ENCODE measurements at regions of chr9 and their contacts with region 1.

Region 1: DNA sequence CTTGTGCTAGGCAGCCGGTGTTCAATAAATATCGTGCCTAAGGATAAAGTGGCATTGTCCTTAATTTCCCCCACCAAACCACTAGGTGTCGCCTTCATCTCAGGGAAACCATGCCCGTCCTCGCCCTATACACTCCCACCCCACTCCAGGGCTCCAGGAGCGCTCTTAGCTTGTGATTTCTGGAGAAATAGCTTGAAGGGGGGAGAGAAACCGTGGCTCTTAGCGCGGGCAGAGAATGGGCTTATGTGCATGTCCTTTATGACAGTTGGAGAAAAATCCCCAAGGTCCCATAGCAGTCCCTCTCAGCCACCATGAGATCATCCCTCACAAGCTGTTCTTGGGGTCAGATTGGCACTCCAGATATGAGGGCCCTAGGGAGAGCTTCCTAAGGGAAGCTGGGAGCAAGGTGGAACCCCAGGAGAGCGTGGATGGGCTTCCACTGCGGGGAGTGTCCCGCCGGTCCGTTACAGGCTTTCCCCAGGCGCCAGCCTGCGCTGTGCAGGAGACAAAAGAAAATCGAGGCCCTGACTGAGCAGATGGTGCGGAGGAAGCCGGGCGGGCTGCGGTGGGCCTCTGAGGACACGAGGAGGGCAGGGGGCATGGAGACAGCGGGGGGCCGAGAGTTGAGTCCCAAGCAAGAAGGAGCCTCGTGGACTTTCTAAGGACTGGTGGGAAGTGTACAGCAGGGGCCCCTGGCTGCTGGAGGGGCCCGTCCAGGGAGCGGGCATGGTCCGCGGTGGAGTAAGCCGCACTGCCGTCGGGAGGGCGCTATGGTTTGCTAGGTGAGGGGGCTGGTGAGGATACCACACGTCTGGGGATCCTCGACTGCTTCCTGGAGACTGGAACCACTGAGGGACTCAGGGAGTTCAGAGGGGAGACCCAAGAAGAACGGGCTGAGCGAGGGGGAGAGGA is 750 bp upstream of the NPR2 start:
- DNase-seq: peak; percentile 68 to 80 (median 72)
- H3K4me3 ChIP-seq: peak overlapping the region in 1 of 7 experiments; percentile 35
- H3K27ac ChIP-seq: no peak overlapping the region
- H3K4me1 ChIP-seq: peaks cover 0 to 18% (median 10%) of the 10 kb centered on the region in 4 experiments
- H3K27me3 ChIP-seq: peaks cover 0 to 3% (median 0%) of the 10 kb centered on the region in 5 experiments

Region 2: GRCh38 chr9:35756275-35757225 is 34.1 kb before region 1 on chr9:
- CTCF ChIA-PET with region 1: interaction called, 10 read pairs
- POLR2A ChIA-PET with region 1: no interaction called
- DNase-seq: peak; percentile 81 to 88 (median 86)
- H3K4me3 ChIP-seq: peak overlapping the region; percentile 71 to 93 (median 79)
- H3K27ac ChIP-seq: peak overlapping the region; percentile 92 to 97
- H3K4me1 ChIP-seq: peaks cover 29 to 65% (median 47%) of the 10 kb centered on the region in 4 experiments
- H3K27me3 ChIP-seq: no peaks in the 10 kb centered on the region

Region 3: GRCh38 chr9:35805551-35805950 is 14.9 kb after region 1 on chr9:
- CTCF ChIA-PET with region 1: interaction called, 56 read pairs
- POLR2A ChIA-PET with region 1: no interaction called
- DNase-seq: no peak
- H3K4me3 ChIP-seq: no peak overlapping the region
- H3K27ac ChIP-seq: no peak overlapping the region
- H3K4me1 ChIP-seq: peaks cover 0 to 4% (median 0%) of the 10 kb centered on the region in 4 experiments
- H3K27me3 ChIP-seq: no peaks in the 10 kb centered on the region

Region 4: DNA sequence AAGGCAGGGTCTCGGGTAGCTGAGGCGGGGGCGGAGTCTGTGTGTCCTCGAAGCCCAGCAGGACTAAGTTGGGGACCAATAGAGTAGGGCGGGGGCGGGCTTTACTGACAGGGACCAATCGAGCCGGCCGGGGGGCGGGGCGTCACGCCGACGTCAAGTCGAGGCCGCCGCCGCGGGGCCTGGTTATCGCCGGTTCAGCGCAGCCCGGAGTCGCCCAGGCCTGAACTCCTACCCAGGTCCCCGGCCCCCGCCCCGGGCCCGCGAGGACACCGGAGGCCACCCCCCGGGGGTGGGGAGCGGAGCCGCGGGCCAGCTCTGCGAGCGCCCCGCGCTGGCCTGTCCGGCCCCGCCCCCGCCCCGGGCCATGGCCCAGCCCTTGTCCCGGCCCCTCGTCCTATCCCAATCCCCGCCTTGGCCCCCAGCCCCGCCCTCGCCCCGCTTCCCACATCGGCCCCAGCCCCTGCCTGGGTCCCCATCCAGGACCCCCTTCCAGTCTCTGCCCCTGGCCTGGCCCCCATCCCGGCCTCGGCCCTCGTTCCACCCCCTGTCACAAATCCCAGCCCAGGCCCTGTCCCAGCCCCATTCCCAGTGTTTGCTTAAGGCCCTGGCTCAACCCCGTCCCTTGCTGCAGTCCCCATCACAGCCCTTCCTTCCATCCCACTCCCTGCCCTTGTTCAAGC is 38.6 kb after region 1 on chr9 and contains the start of gene TMEM8B:
- CTCF ChIA-PET with region 1: interaction called, 61 read pairs
- POLR2A ChIA-PET with region 1: interaction called, 3 read pairs
- DNase-seq: peak; percentile 92 to 93 (median 92)
- H3K4me3 ChIP-seq: peak within 1 kb of the TSS; percentile 48 to 84 (median 75)
- H3K27ac ChIP-seq: peak within 1 kb of the TSS in 1 of 2 experiments; percentile 67
- H3K4me1 ChIP-seq: peaks cover 2 to 27% (median 24%) of the 10 kb centered on the region in 4 experiments
- H3K27me3 ChIP-seq: peaks cover 0 to 6% (median 3%) of the 10 kb centered on the region in 5 experiments

Region 5: GRCh38 chr9:35859310-35859989 is 68.8 kb after region 1 on chr9:
- CTCF ChIA-PET with region 1: interaction called, 12 read pairs
- POLR2A ChIA-PET with region 1: no interaction called
- DNase-seq: peak; percentile 80 to 89 (median 85)
- H3K4me3 ChIP-seq: no peak overlapping the region
- H3K27ac ChIP-seq: no peak overlapping the region
- H3K4me1 ChIP-seq: no peaks in the 10 kb centered on the region
- H3K27me3 ChIP-seq: peaks cover 0 to 94% (median 39%) of the 10 kb centered on the region in 5 experiments

Region 6: DNA sequence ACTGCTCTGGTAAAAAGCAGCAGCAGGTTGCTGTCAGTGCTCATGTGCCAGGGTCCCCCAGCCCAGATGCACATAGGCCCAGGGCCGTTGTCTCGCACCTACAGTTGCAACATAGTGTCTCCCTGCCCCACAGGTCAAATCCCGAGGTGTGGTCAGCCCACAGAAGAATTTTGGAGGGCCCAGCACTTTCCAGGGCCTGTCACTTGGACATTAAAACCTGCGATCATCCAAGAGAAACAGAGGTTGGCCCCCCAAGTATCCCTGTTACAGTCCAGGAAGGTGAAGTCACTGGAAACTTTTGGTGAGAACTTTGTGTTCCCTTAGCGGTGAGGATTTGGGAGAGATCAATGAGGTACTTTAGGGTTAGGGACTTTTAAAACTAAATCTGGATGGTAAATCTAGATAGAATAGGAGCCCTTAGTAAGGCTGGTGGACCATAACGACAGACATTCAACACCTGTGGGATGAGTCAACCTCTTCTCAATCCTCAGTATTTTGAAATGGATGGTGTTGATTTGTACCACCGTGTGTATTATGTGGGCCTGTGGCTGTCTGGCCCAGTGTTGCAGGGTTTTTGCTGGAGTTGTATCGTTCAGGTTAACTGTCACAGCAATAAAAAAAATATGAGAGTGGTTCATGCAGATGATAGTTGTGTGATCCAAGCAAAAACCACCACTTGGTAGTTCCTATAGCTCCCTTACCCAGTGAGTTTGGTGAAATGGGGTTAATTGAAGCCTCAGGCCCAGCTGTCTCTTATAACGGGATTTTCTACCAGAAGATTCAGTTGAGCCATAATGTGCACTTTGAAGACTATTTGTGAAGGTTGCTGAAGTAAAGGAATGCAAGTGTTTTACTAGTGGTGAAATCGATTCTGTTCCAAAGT is 148.1 kb after region 1 on chr9:
- CTCF ChIA-PET with region 1: no interaction called
- POLR2A ChIA-PET with region 1: no interaction called
- DNase-seq: no peak
- H3K4me3 ChIP-seq: no peak overlapping the region
- H3K27ac ChIP-seq: no peak overlapping the region
- H3K4me1 ChIP-seq: peaks cover 0 to 26% (median 1%) of the 10 kb centered on the region in 4 experiments
- H3K27me3 ChIP-seq: no peaks in the 10 kb centered on the region

Measured in common myeloid progenitor, CD34-positive (primary cell).